ENCODE measurements at regions of chr2 and their contacts with region 1.

Region 1: GRCh38 chr2:121382744-121383143 is 97.7 kb upstream of the TFCP2L1 start:
- DNase-seq: no peak

Region 2: DNA sequence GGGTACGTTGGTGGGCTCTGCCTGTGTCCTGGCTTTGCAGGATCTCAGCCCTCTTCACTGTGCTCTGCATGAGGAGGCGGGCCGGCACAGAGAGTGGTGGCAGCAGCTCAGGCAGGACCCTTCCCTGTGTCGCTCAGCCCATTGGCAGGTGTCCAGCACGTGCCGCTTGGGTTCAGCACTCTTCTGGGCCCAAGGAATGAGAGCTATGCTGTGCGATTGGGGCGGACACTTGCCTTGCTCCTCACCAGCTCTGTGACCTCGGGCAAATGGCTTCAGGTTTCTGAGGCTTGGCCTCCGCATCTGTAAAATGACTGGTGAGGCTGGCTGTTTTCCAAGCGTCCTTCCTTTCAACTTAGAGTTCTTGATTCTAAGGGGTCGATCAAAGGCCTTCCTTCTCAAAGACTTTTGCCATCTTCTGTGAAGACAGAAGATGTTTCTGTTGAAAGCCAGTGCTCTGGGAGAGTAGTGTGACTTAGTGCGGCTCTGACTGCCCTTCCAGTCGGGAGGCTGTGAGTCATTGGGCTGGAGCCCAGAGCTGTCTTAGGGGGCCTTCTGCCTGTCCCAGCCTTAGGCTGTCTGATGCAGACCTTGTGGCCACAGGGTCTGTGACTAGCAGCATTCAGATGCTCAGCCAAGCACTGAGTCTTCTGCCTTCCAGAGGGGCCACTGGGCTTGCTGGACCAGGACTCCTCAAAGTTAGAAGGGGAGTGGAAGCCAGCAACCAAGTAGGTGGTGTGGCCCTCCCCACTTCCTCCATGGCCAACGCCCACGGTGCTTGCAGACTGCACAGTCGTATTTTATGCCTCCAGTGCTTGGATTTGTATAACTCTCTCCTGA is 611.4 kb before region 1 on chr2:
- intact Hi-C with region 1: loop called in 1 of 2 experiments (anchors 10 kb)
- DNase-seq: peak; percentile 95

Region 3: DNA sequence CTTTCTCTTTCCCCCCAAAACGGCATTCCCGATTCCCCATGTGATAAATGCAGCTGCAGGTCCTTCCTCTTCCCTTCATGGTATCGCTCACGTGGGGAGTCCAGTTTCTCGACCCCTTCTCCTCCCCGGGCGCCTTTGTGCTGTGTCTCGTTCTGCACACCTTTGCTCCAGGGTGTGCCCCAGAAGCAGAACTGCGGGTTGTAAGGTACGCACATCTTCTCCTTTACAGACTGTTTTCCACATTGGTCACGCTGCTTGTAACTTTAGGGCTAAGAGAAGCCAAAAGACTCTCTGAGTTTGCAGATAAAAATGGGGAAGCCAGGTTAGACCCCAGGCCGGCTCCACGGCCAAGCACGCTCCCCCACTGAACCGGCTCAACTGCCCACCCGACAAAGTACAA is 51.9 kb before region 1 on chr2:
- intact Hi-C with region 1: no loop called
- DNase-seq: no peak

Region 4: DNA sequence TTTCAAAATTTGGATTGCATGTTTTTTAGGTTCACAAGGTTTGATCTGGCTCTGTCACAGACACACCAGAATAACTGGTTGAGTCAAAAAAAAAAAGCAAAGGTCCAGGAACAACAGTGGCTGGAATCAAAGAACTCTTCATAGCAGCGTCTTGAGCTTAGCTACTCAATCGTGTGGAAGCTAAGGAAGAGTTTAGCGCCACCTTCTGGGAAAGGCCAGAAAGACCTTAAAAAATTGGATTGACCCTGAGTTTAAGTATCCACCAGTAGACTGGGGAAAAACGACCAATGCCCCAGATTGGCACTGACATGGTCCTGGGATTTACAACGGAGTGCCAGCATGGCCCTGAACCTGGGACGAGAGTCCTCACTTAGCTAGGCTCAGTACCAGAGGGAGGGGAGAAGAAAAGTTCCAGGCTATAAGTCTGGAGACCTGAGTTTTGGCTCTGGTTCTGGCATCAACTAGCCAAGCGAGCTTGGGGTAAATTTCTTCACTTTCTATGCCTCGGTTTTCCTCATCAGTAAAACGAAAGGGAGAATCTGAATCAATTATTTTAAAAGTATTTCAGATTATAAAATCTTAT is 26.6 kb before region 1 on chr2:
- intact Hi-C with region 1: no loop called
- DNase-seq: no peak